ENCODE measurements at regions of chr2 and their contacts with region 1.

Region 1: GRCh38 chr2:215430528-215431187 is 5.2 kb downstream of the FN1 start:
- DNase-seq: no peak
- ATAC-seq: no peak
- H3K4me3 ChIP-seq: no peak overlapping the region
- H3K4me3 Mint-ChIP-seq: no peak overlapping the region
- H3K27ac ChIP-seq: no peak overlapping the region
- H3K27ac Mint-ChIP-seq: no peak overlapping the region
- H3K4me1 ChIP-seq: peaks cover 4 to 6% of the 10 kb centered on the region in 2 experiments
- H3K4me1 Mint-ChIP-seq: peaks cover 0 to 11% (median 7%) of the 10 kb centered on the region in 3 donors
- H3K27me3 ChIP-seq: peaks cover 10 to 11% of the 10 kb centered on the region in 2 experiments
- H3K27me3 Mint-ChIP-seq: peaks cover 62 to 72% of the 10 kb centered on the region in 2 donors

Region 2: GRCh38 chr2:215460682-215461382 is 30.2 kb after region 1 on chr2:
- CTCF ChIA-PET with region 1: no interaction called
- POLR2A ChIA-PET with region 1: no interaction called
- DNase-seq: no peak
- ATAC-seq: no peak
- H3K4me3 ChIP-seq: no peak overlapping the region
- H3K4me3 Mint-ChIP-seq: no peak overlapping the region
- H3K27ac ChIP-seq: no peak overlapping the region
- H3K27ac Mint-ChIP-seq: no peak overlapping the region
- H3K4me1 ChIP-seq: no peaks in the 10 kb centered on the region
- H3K4me1 Mint-ChIP-seq: no peaks in the 10 kb centered on the region
- H3K27me3 ChIP-seq: peaks cover 0 to 2% of the 10 kb centered on the region in 2 experiments
- H3K27me3 Mint-ChIP-seq: peaks cover 6 to 20% of the 10 kb centered on the region in 2 donors

Region 3: DNA sequence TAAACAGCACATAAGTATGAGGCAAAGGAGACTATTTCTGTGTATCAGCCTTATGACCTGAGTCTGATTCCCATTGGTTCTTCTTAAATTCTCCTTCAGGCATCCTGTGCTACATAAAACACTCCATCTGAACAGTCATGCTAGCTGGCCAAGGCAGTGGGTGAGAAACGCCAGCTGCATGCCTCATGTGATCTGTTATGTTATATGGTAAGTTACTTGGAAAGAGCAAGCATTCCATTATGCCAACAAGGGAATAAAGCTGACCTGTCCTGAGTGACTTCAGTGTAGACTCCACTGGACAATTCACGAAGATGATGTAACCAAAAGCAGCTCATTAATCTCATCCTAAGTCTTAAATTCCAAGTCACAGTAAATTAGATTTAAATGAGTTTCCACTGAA is 221.7 kb after region 1 on chr2:
- CTCF ChIA-PET with region 1: interaction called in 1 of 2 experiments, 10 read pairs
- POLR2A ChIA-PET with region 1: no interaction called
- DNase-seq: no peak
- ATAC-seq: no peak
- H3K4me3 ChIP-seq: no peak overlapping the region
- H3K4me3 Mint-ChIP-seq: no peak overlapping the region
- H3K27ac ChIP-seq: no peak overlapping the region
- H3K27ac Mint-ChIP-seq: no peak overlapping the region
- H3K4me1 ChIP-seq: no peaks in the 10 kb centered on the region
- H3K4me1 Mint-ChIP-seq: no peaks in the 10 kb centered on the region
- H3K27me3 ChIP-seq: no peaks in the 10 kb centered on the region
- H3K27me3 Mint-ChIP-seq: peaks cover 0 to 11% of the 10 kb centered on the region in 2 donors

Region 4: GRCh38 chr2:215931256-215931903 is 500.7 kb after region 1 on chr2:
- CTCF ChIA-PET with region 1: interaction called in 1 of 2 experiments, 10 read pairs
- POLR2A ChIA-PET with region 1: no interaction called
- DNase-seq: peak in 27 of 35 experiments; percentile 2 to 68 (median 22)
- ATAC-seq: peak in 3 of 4 experiments; percentile 43 to 56 (median 50)
- H3K4me3 ChIP-seq: no peak overlapping the region
- H3K4me3 Mint-ChIP-seq: no peak overlapping the region
- H3K27ac ChIP-seq: no peak overlapping the region
- H3K27ac Mint-ChIP-seq: no peak overlapping the region
- H3K4me1 ChIP-seq: no peaks in the 10 kb centered on the region
- H3K4me1 Mint-ChIP-seq: no peaks in the 10 kb centered on the region
- H3K27me3 ChIP-seq: no peaks in the 10 kb centered on the region
- H3K27me3 Mint-ChIP-seq: peaks cover 4 to 9% of the 10 kb centered on the region in 2 donors